CD4-positive, alpha-beta memory T cell (primary cell): ENCODE measurements at regions of chr10 and their contacts with region 1.

Region 1: DNA sequence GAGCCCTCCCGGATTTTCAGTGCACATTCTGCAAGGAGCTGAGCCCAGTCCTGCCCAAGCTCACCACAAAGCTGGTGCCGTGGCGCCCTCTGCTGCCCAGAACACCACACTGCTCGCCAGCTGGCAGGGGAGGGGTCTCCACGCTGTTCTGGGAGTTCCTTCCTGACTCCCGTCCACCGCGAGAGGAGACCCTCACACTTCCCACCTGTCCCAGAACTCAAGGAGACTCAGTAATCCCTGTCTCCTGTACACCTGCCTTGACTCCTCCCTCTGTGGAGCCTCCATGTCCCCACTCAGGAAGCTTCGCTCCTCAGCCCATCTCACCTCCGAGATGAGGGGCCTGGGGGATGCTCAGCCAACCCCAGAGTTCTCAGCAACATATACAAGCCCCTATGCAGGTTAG is 11.3 kb downstream of the C10orf105 start:
- DNase-seq: peak in 4 of 5 donors; percentile 51 to 66 (median 59)
- H3K4me3 ChIP-seq: no peak overlapping the region
- H3K4me3 Mint-ChIP-seq: peak overlapping the region in 3 of 8 donors; percentile 25 to 34 (median 29)
- H3K27ac ChIP-seq: no peak overlapping the region
- H3K27ac Mint-ChIP-seq: peak overlapping the region in 4 of 7 donors; percentile 18 to 52 (median 20)
- H3K4me1 ChIP-seq: peaks cover 27% of the 10 kb centered on the region
- H3K4me1 Mint-ChIP-seq: peaks cover 27 to 49% (median 38%) of the 10 kb centered on the region in 4 donors
- H3K27me3 ChIP-seq: no peaks in the 10 kb centered on the region
- H3K27me3 Mint-ChIP-seq: no peaks in the 10 kb centered on the region

Region 2: DNA sequence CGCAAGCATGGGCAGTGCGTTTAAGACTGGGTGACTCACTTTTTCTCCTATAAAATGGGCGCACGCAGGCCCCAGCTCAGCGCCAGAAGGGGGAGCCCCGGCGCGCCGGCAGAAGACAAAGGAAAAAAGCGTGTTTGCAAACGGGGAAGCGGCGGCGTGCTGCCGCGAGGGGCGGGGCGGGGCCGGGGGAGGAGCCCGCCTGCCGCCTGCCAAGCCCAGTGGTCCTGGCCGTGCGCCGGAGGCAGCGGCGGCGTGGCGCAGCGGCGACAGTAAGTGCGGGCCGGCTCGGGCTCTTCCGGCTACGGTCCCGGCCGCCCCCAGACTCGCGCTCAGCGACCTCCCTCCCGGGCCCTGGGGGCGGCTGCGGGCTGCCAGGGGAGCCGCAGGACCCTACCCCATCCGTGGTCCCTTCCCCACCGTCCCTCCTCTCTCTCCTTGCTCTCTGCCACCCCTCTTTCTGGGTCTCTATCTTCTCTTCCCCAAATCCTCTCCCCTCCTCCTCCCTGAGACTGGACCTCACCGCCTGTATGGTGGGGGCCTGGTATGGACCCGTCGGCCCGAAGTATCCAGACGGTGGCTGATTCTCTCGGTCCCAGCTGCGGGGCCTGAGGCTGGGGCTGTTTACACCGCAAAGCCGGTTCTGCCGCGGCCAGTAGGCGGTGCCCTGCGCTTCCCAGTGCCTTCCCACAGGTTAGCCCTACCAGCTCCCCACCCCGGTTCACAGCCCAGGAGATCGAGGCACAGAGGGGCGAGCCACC is 389.1 kb before region 1 on chr10 and contains the start of gene SLC29A3:
- CTCF ChIA-PET with region 1: interaction called, 32 read pairs
- POLR2A ChIA-PET with region 1: interaction called, 11 read pairs
- intact Hi-C with region 1: loop called (anchors 2 kb)
- DNase-seq: peak; percentile 78 to 87 (median 80)
- H3K4me3 ChIP-seq: peak within 1 kb of the TSS; percentile 69 to 80
- H3K4me3 Mint-ChIP-seq: peak within 1 kb of the TSS; percentile 87 to 97 (median 92)
- H3K27ac ChIP-seq: peak within 1 kb of the TSS; percentile 54
- H3K27ac Mint-ChIP-seq: peak within 1 kb of the TSS; percentile 78 to 93 (median 89)
- H3K4me1 ChIP-seq: peaks cover 19% of the 10 kb centered on the region
- H3K4me1 Mint-ChIP-seq: peaks cover 16 to 51% (median 27%) of the 10 kb centered on the region in 4 donors
- H3K27me3 ChIP-seq: no peaks in the 10 kb centered on the region
- H3K27me3 Mint-ChIP-seq: no peaks in the 10 kb centered on the region
- total RNA-seq, gene SLC29A3: 7.0 to 9.1 TPM

Region 3: DNA sequence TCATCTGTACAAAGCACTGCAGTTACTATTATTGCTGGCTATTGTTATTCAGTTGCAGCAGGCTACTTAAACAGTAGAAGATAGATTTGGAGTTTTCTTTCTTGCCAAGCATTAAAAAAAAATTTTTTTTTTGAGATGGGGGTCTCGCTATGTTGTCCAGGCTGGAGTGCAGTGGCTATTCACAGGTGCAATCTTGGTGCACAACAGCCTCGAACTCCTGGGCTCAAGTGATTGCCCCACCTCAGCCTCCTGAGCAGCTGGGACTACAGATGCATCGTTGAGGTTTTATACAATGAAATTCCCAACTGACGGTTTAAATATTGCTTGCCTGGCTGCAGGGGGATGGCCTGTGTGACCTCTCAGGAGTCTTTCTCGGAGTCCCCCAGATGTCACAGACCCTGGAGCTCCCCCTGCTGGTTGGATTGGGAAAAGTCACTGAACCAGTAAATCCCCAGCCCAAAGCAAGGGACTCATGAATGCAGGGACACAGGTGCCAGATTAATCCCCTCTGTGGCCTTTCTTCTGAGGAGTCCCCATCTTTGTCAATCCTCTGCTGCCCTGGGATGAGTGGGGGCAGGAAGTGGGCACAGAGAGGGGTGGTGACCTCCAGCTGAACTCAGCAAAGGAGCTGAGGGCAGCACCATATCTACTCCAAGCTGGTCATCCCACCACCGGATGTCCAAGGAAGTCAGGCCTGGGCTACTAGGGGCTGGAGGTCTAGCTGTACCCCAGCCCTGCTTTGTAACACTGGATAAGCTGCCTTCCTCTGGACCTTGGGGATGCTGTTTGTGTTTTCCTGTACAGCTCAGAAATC is 138.3 kb before region 1 on chr10:
- CTCF ChIA-PET with region 1: interaction called, 12 read pairs
- POLR2A ChIA-PET with region 1: no interaction called
- intact Hi-C with region 1: no loop called
- DNase-seq: peak; percentile 54 to 68 (median 63)
- H3K4me3 ChIP-seq: no peak overlapping the region
- H3K4me3 Mint-ChIP-seq: no peak overlapping the region
- H3K27ac ChIP-seq: no peak overlapping the region
- H3K27ac Mint-ChIP-seq: no peak overlapping the region
- H3K4me1 ChIP-seq: no peaks in the 10 kb centered on the region
- H3K4me1 Mint-ChIP-seq: no peaks in the 10 kb centered on the region
- H3K27me3 ChIP-seq: no peaks in the 10 kb centered on the region
- H3K27me3 Mint-ChIP-seq: peaks cover 0 to under 1% of the 10 kb centered on the region in 2 donors

Region 4: DNA sequence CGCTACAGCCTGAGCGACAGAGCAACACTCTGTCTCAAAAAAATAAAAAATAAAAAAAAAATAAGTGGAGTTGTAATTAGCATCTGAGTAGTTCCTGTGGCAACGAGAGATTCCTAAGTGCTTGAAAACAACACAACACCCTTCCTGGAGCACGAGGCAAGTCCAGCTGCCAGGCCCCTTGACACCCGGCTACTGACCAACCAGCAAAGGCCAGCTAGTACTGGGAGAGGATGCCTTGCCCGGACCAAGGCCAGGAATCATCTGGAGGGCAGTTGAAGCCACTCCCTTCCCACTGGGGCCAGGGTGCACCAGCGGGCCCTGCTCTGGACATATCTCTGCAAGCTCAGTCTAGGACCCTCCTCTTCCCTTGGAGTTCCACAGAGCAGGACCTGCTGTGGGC is 10.7 kb after region 1 on chr10:
- CTCF ChIA-PET with region 1: interaction called, 177 read pairs
- POLR2A ChIA-PET with region 1: interaction called, 196 read pairs
- intact Hi-C with region 1: no loop called
- DNase-seq: no peak
- H3K4me3 ChIP-seq: no peak overlapping the region
- H3K4me3 Mint-ChIP-seq: no peak overlapping the region
- H3K27ac ChIP-seq: no peak overlapping the region
- H3K27ac Mint-ChIP-seq: peak overlapping the region in 2 of 7 donors; percentile 41 to 79
- H3K4me1 ChIP-seq: peaks cover 74% of the 10 kb centered on the region
- H3K4me1 Mint-ChIP-seq: peaks cover 27 to 79% (median 47%) of the 10 kb centered on the region in 4 donors
- H3K27me3 ChIP-seq: no peaks in the 10 kb centered on the region
- H3K27me3 Mint-ChIP-seq: no peaks in the 10 kb centered on the region

Region 5: DNA sequence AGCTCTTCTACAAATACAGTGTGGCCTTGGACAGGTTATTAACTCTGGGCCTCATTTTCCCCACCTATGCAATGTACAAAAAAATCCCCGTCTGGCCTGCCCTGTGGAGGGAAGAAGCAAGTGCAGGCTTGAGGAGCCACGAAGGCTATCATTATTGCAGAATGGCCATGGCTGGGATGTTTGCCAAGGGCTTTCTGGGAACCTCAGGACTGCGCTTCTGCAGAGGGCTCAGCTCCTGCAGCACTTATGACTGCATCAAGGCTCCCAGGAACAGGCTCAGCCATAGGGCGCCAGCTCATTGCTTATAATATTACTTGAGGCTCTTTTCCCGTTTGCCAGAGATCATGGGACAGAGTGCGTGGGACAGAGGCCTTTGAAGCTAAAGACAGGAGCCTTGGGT is 31.8 kb after region 1 on chr10:
- CTCF ChIA-PET with region 1: interaction called, 27 read pairs
- POLR2A ChIA-PET with region 1: interaction called, 1,191 read pairs
- intact Hi-C with region 1: no loop called
- DNase-seq: no peak
- H3K4me3 ChIP-seq: no peak overlapping the region
- H3K4me3 Mint-ChIP-seq: peak overlapping the region in 7 of 8 donors; percentile 26 to 74 (median 59)
- H3K27ac ChIP-seq: peak overlapping the region; percentile 11
- H3K27ac Mint-ChIP-seq: peak overlapping the region; percentile 58 to 97 (median 89)
- H3K4me1 ChIP-seq: peaks cover 100% of the 10 kb centered on the region
- H3K4me1 Mint-ChIP-seq: peaks cover 76 to 100% (median 93%) of the 10 kb centered on the region in 4 donors
- H3K27me3 ChIP-seq: no peaks in the 10 kb centered on the region
- H3K27me3 Mint-ChIP-seq: no peaks in the 10 kb centered on the region

Region 6: DNA sequence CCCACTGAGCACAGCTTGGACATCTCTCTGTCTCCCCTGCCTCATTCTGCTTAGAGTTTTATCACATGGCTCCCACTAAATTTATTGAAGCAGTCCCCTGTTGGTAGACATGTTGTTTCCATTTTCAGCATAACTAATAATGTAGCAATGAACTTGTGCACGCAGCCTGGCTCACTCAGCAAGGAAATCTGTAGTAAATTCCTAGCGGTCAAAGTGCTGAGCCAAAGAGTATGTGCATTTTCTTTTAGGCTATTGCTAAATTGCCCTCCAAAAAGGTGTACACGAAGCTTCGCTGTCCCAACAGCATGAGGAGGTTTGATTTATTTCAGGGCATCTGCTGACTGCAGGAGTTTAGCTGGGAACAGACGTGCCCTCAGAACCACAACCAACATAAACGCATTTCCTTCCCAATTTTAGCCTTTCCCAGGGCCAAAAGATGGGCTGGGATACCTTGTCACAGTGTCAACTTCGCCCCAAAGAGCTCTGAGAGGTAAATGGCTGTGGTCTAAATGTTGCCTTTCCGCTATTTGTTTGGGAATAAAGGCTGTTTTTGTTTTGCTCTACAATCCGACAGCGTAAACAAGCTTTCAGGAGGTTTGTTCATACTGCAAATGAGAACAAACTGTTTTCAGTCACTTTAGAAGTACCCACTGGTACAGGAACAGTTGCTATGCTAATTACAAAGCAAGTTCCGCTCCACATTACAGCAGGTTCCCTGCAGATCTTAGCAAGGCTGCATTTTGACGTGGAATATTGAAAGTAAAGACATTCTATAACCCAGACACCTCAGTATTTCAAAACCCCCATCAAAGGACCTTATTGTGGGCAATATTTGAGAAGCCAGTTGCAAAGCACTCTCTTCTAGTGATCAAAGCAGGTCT is 48.2 kb after region 1 on chr10:
- CTCF ChIA-PET with region 1: interaction called, 379 read pairs
- POLR2A ChIA-PET with region 1: interaction called, 1,191 read pairs
- intact Hi-C with region 1: no loop called
- DNase-seq: peak; percentile 5 to 76 (median 73)
- H3K4me3 ChIP-seq: peak overlapping the region in 1 of 2 donors; percentile 35
- H3K4me3 Mint-ChIP-seq: peak overlapping the region; percentile 54 to 87 (median 76)
- H3K27ac ChIP-seq: peak overlapping the region; percentile 53
- H3K27ac Mint-ChIP-seq: peak overlapping the region; percentile 95 to 99 (median 96)
- H3K4me1 ChIP-seq: peaks cover 94% of the 10 kb centered on the region
- H3K4me1 Mint-ChIP-seq: peaks cover 68 to 100% (median 83%) of the 10 kb centered on the region in 4 donors
- H3K27me3 ChIP-seq: no peaks in the 10 kb centered on the region
- H3K27me3 Mint-ChIP-seq: no peaks in the 10 kb centered on the region

Region 7: GRCh38 chr10:71812016-71812912 is 104.0 kb after region 1 on chr10:
- CTCF ChIA-PET with region 1: interaction called, 28 read pairs
- POLR2A ChIA-PET with region 1: interaction called, 4 read pairs
- intact Hi-C with region 1: no loop called
- DNase-seq: peak; percentile 63 to 78 (median 75)
- H3K4me3 ChIP-seq: no peak overlapping the region
- H3K4me3 Mint-ChIP-seq: no peak overlapping the region
- H3K27ac ChIP-seq: no peak overlapping the region
- H3K27ac Mint-ChIP-seq: no peak overlapping the region
- H3K4me1 ChIP-seq: no peaks in the 10 kb centered on the region
- H3K4me1 Mint-ChIP-seq: peaks cover 0 to 2% (median 0%) of the 10 kb centered on the region in 4 donors
- H3K27me3 ChIP-seq: no peaks in the 10 kb centered on the region
- H3K27me3 Mint-ChIP-seq: no peaks in the 10 kb centered on the region

Region 8: GRCh38 chr10:72038458-72039001 is 330.2 kb after region 1 on chr10:
- CTCF ChIA-PET with region 1: no interaction called
- POLR2A ChIA-PET with region 1: no interaction called
- intact Hi-C with region 1: no loop called
- DNase-seq: no peak
- H3K4me3 ChIP-seq: no peak overlapping the region
- H3K4me3 Mint-ChIP-seq: no peak overlapping the region
- H3K27ac ChIP-seq: no peak overlapping the region
- H3K27ac Mint-ChIP-seq: no peak overlapping the region
- H3K4me1 ChIP-seq: no peaks in the 10 kb centered on the region
- H3K4me1 Mint-ChIP-seq: no peaks in the 10 kb centered on the region
- H3K27me3 ChIP-seq: no peaks in the 10 kb centered on the region
- H3K27me3 Mint-ChIP-seq: peaks cover 0 to 3% of the 10 kb centered on the region in 2 donors